Cardiac septum (tissue), 1 donor: ENCODE measurements at regions of chr11 and their contacts with region 1.

Region 1: DNA sequence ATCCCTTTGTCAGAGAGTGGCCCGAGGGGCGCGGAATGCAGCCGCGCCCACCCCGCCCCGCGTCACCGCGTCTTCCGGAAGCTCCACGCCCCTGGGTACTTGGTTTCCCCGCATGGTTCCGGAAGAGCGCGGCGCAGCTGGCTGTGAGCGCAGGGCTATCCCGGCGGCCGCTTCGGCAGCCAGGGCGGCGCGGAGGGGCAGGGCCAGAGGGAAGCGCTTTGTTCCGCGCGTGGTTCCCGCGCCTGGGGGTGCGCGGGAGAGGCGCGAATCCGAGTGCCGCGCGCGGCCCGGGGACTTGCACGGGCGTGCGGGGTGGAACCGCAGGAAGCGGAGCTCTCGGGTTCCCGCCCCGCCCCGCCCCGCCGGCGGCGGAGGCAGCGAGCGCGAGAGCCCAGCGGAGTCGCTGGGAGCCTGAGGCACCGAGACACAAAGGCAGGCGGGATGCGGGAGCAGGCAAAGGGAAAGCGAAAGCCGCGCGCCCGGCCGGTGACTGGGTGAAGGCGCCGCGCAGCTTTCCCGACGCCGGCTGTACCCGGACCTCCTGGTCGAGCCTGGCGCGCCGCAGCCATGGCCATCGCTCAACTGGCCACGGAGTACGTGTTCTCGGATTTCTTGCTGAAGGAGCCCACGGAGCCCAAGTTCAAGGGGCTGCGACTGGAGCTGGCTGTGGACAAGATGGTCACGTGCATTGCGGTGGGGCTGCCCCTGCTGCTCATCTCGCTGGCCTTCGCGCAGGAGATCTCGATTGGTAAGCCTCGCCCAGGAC is at the start of gene PANX1:
- DNase-seq: peak; percentile 84
- total RNA-seq, gene PANX1: 28.9 TPM

Region 2: GRCh38 chr11:94077552-94078293 is 51.2 kb before region 1 on chr11:
- intact Hi-C with region 1: no loop called
- DNase-seq: no peak

Region 3: DNA sequence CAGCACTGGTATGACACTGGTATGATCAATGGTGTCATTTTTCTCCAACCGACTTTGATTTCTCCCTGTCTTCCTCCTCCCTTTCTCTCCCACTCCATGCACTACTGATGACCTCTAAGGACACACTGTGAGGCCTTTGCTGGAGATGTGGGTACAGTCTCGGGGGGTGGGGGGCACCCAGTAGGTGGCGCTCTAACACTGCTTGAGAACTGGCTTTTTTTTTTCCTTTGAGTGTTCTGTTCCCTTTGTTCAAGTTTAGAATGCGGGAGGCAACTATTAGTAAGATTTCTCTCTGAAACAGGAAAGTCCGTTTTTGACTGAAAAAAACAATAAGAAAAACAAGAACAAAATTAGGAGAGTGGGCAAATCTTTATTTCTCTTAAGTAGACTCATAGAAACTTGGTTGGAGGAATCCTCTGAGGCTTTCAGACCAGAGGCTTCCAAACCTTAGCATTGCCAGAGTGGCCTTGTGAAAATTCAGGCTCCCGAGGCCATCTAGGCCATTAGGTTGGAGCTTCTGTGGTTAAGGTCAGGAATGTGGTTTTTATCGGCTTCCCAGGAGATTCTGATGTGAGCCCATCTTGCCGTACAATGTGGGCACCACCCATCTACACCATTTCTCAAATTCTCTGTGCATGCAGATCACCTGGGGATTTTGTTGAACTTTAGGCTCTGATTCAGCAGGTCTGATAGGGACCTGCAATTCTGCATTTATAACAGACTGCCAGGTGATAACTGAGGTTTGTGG is 42.9 kb after region 1 on chr11:
- intact Hi-C with region 1: loop called (anchors 10 kb)
- DNase-seq: no peak

Region 4: DNA sequence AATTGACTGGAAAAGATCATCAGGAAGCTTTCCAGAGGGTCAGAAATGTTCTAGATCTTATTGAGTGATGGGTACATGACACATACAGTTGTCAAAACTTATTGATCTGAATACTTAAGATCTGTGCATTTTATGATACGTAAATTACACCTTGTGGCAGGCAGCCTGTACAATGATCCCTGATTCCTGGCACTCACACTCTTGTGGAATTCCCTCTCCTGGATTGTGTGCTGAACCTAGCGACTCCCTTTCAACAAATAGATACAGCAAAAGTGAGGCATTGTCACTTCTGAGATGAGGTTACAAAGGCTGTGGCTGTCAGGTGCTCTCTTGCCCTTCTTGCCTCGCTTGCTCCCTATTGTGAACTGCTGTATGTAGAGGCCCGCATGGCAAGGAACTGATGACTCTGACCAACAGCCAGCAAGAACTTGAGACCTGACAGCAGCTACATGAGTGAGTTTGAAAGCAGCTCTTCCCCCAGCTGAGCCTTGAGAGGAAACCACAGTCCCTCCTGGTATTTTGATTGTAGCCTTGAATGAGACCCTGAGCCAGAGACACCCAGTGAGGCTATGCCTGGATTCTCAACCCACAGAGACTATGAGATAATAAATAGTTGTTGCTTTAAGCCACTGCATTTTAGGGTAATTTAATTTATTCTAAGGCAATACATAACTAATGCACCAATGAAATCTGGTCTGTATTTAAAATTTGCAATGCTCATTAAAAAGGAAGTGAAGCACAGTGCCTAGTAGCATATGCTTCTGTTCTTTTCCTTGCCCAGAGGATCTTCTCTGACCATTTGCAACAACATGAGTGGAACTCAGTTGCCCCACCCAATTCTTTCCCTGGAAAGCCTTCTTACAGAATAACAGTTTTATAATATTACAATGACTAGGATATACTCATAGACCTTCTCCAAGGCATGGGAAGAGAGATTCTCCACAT is 114.9 kb after region 1 on chr11:
- intact Hi-C with region 1: no loop called
- DNase-seq: no peak